Cardiac septum (tissue), 1 donor: ENCODE measurements at regions of chr1 and their contacts with region 1.

Region 1: DNA sequence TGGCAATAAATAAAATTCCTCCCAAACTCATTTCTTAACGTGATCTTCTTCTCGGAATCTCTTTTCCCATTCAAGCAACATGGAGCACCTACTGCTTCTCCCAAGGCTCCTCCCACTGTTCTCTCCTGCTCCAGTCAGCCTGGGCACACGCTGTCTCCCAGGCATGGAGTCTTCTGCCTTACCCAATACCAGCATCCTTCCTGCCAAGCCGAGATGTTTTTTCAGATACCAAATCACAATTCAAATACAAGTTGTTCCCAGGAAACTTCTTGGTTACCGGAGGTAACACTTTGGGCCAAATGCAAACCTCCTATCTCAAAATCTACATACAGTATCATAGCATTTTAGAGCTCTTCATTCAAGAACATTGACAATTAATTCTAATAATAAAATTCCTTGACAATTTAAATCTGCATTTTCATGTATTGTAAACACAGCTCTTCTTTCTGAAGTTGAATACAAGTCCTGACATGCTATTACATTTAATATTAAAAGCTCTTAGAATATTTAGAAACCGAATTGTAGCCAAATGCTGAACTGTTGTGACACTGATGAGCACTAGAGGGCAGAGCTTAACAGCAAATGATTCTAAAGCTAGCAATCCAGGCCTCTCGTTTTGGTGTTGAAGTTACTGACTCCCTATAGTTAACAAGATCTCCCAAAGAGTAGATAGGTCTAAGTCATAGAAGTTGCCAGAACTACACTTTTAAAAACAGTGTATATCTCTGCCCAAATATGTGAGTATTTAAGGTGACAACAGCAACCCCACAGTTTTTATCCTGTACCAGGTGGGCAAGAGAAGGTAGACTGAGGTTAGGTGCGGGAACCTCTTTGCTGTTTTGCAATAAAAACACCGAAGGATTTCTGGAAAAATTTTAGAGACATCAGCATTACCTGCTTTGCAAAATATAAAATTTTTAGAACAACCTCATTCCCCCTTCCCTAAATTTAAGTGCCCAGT is 52.3 kb downstream of the BCAR3 start:
- DNase-seq: no peak

Region 2: DNA sequence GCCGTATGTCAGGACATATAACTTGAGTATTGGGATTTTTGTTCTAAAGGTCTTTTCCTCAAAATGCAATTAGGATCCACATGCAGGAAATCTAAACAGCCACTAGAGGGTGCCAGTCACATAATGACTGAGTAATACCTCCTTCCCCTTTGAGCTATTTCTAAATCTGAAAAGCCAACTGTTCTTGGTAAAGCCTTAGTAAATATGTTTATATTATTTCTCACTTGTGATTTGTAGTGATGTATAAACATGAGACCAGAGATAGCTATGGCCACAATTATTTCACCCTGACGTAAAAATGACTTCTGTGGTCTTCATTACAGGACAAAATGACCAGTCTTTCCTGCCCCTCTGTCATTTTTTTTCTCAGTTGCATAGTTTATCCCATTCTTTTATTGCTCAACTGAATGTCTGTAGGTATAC is 324.7 kb before region 1 on chr1:
- intact Hi-C with region 1: loop called (anchors 10 kb)
- DNase-seq: no peak

Region 3: GRCh38 chr1:93345633-93346420 is 283.6 kb before region 1 on chr1 and contains the start of gene DR1:
- intact Hi-C with region 1: loop called (anchors 10 kb)
- DNase-seq: peak; percentile 98
- total RNA-seq, gene DR1: 41.2 TPM

Region 4: DNA sequence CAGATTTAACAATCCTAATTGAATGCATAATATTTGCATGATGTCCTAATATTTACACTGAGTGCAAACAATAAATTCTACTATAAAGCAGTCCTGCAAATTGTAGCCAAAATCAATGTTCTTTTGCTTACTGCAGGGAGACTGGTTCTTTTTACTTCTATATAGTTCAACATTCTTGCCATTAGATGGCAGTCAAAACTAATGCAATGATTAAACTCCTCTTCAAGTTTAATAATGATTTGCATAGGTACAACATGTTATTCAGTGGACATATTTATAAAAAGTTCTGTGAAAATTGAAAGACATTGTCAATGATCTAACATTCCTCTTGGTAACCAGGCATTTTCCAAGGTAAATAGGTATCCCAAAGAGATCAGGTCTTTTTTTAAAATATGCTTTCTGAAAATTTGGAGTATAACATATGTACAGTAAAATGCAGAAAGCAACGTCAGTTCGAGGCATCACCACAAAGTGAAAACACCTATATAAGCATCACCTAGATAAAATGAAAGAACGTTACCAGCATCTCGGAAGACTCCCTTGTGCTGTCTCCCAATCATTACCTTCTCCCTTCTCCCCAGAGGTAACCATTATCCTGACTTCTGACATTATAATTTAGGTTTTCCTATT is 191.3 kb before region 1 on chr1:
- intact Hi-C with region 1: loop called (anchors 2 kb)
- DNase-seq: no peak

Region 5: DNA sequence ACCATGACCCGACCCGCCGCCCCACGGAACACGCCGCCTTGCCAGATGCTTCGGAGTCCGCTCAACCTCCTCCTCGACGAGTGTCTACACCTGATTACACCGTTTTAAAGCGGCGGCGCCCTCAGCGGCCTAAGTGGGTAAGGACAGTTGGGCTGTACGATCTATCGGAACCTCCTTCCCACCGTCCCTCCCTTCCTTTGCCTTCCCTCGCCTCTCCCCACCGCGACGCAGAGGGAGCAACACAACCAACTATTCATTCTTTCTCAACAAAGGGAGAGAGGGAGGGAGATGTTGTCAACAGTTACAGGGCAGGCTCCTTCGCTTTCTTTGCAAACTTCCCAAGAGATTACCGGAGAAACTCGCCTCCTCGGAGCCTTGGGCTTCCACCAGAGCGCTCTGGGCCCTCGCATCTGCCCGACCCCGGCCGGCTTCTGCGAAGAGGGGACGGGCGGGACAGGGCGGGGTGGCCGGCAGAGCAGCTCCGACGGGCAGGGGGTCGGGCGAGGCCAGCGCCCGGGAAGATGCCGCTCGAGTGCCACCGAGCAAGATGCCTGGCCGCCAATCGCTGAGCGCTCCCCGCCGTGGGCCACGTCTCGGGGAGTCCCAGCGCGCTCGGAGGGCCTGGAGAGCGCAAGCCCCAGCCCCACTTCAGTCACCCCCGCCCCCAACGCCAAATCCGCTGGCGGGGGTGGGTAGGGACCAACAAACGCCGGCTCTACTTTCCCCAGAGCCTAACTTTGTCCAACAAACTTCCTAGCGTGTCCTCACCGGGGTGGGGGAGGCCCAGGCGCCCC is 51.6 kb after region 1 on chr1:
- intact Hi-C with region 1: loop called (anchors 2 kb)
- DNase-seq: peak; percentile 85

Region 6: DNA sequence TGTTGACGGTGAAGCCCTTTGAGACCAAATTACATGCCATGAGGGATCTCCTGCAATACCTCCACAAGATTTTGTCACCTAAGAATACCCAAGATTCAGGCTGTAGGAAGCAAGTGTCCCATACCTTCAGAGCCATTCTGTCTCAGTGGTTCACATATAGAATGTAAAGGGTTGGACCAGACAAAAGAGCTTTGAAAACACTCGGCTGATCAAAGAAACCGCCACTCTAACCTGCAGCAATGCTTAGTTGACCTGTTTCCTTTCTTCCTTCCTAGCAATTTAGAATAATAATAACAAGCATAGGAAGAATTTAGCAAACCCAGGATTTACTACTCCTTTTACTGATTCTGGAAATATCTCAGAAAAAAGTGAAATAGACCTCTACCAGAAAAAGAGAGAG is 173.7 kb after region 1 on chr1:
- intact Hi-C with region 1: no loop called
- DNase-seq: no peak

Region 7: DNA sequence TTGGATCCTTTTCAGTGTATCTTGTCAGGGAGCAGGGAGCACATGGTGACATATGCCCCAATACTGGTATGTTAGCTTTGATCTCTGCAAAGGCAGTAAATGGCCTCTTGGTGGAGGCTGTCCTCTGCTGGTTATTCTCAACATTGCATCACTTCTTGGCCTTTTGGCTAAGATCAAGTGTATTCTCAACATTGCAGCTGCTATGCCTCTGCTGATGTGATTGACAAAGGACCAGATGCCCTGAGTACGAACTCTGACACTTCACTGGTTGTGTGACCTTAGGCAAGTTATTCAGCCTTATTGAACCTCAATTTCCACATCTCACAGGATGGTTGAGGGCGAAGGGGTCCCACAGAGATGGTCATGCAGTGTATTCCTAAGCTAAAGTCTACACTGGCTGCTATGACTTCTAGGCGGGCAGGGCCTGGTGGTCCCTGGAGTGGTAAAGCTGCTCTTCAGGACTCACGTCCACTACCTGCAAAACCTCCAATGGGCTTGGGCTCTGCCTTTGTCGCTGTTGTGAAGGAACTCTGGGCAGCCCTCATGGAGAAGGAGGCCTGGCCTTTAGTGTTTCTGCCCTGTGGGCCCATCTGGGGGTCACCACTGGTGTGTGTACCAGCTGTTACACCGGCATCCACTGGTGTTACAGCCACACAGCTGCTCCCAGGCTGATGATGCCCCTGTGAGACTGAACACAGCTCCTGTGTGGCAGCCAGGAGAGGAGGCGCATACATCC is 184.8 kb after region 1 on chr1:
- intact Hi-C with region 1: loop called (anchors 1 kb)
- DNase-seq: no peak